PC-9 (cell line): ENCODE measurements at regions of chr7 and their contacts with region 1.

Region 1: GRCh38 chr7:120987683-120988590 is 574 bp upstream of the CPED1 start:
- DNase-seq: peak; percentile 74 to 85
- H3K4me3 ChIP-seq: peak overlapping the region; percentile 74
- H3K27ac ChIP-seq: no peak overlapping the region
- H3K4me1 ChIP-seq: peaks cover 10% of the 10 kb centered on the region
- H3K27me3 ChIP-seq: no peaks in the 10 kb centered on the region
- CTCF ChIP-seq: peak; percentile 95

Region 2: DNA sequence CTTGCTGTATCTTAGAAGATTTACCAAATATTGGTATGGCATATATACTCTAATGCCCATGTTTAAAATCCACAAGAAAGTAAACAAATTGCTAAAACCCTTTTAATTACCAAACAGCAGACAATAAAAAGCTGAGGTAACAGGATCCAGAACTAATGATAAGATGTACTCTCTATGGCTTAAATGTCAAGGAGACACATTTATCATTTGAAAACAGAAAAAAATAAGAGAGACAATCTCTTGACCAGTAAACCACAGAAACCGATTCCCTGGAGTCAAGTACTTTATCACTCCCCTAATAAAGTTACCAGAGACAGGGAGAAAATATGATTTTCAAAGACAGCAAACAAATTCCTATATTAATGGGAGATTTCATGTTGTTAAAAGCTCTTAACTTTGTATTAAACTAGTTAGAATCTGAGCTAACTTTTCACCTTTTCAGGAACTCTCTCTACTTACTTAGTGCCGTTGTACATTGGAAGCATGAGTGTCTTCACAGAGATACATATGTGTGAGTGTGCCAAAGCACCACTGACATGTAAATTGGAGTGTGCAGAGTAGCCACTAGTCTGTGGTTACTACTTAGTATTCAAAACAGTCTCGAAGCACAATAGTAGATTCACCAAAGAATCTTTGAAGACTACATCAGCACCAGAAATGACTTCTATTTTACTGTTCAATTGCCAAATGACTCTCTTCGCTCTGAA is 174.2 kb before region 1 on chr7:
- CTCF ChIA-PET with region 1: no interaction called
- POLR2A ChIA-PET with region 1: no interaction called
- intact Hi-C with region 1: no loop called
- DNase-seq: no peak
- H3K4me3 ChIP-seq: no peak overlapping the region
- H3K27ac ChIP-seq: no peak overlapping the region
- H3K4me1 ChIP-seq: no peaks in the 10 kb centered on the region
- H3K27me3 ChIP-seq: no peaks in the 10 kb centered on the region
- CTCF ChIP-seq: no peak

Region 3: GRCh38 chr7:120877701-120878100 is 110.2 kb before region 1 on chr7:
- CTCF ChIA-PET with region 1: no interaction called
- POLR2A ChIA-PET with region 1: no interaction called
- intact Hi-C with region 1: no loop called
- DNase-seq: no peak
- H3K4me3 ChIP-seq: no peak overlapping the region
- H3K27ac ChIP-seq: no peak overlapping the region
- H3K4me1 ChIP-seq: peaks cover 17% of the 10 kb centered on the region
- H3K27me3 ChIP-seq: no peaks in the 10 kb centered on the region
- CTCF ChIP-seq: no peak

Region 4: DNA sequence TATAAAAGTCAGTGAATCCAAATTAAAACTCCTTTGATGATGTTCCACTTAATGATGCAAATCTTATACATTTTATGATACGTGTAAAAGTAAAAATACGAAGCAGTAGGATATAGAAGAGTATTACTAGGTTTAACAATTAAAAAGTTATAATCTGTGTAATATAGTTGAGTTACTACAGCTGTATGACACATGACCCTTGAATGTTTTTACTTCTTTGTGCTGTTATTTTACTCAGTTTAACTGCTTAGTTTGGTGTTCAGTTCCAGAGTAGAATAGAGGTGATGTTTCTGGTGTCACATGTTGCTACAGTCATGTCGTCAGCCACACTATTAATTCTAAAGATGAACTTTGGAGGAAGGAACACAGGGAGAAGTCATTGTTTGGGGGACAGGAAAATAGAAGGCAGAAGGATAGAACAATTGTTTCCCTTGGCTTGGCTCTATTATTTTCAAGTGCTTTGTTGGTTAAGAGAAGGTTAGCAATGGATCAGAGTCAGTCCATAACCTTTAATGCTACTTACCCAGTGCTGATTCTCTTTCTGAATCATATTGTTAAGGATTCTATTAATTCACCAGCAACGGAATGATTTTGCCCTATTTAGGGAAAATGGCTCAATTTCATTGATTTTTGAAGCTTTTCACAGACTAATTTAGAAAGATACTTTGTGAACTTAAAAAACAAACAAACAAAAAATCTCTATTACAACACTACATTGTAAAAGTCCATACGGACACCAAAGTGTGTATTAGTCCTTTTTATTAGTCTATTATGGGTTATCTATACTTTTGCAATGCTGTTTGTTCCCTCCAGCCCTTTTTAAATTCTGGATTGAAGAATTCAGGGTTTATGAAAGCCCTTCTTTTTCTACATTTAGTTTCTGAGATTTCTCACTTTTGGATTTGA is 74.0 kb after region 1 on chr7:
- CTCF ChIA-PET with region 1: no interaction called
- POLR2A ChIA-PET with region 1: no interaction called
- intact Hi-C with region 1: no loop called
- DNase-seq: no peak
- H3K4me3 ChIP-seq: no peak overlapping the region
- H3K27ac ChIP-seq: no peak overlapping the region
- H3K4me1 ChIP-seq: no peaks in the 10 kb centered on the region
- H3K27me3 ChIP-seq: no peaks in the 10 kb centered on the region
- CTCF ChIP-seq: no peak

Region 5: DNA sequence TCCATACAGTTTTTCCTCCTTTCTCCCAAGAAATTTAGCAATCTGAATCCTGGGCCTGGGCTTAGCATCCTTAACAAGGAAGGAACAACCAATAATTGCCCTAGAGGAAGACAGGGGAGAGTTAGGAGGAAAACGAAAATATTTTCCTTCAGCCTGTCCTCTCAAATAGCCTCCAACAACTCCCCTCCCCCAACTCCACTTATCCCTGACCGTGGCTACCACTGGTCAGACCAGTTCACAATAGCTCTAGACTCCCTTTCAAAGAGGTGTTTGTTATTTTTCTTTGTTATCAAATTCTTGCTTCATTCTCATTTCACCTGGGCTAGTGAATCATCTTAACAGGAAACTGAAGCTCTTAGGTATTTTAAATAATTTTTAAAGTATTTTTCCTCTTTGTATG is 114.7 kb after region 1 on chr7:
- CTCF ChIA-PET with region 1: interaction called, 7 read pairs
- POLR2A ChIA-PET with region 1: interaction called, 6 read pairs
- intact Hi-C with region 1: loop called (anchors 1 kb)
- DNase-seq: peak; percentile 68 to 90
- H3K4me3 ChIP-seq: peak overlapping the region; percentile 31; the same call in 1 of the 2 replicates
- H3K27ac ChIP-seq: peak overlapping the region; percentile 83
- H3K4me1 ChIP-seq: peaks cover 24% of the 10 kb centered on the region
- H3K27me3 ChIP-seq: no peaks in the 10 kb centered on the region
- CTCF ChIP-seq: no peak

Region 6: GRCh38 chr7:121442845-121443244 is 454.9 kb after region 1 on chr7:
- CTCF ChIA-PET with region 1: no interaction called
- POLR2A ChIA-PET with region 1: no interaction called
- intact Hi-C with region 1: no loop called
- DNase-seq: peak; percentile 85 to 98
- H3K4me3 ChIP-seq: no peak overlapping the region
- H3K27ac ChIP-seq: peak overlapping the region; percentile 0; the same call in 1 of the 2 replicates
- H3K4me1 ChIP-seq: peaks cover 18% of the 10 kb centered on the region; the same call in 1 of the 2 replicates
- H3K27me3 ChIP-seq: no peaks in the 10 kb centered on the region
- CTCF ChIP-seq: no peak